Psoas muscle (tissue), 8 donors: ENCODE measurements at regions of chr10 and their contacts with region 1.

Region 1: GRCh38 chr10:71974489-71975021 is 10.4 kb downstream of the CHST3 start:
- DNase-seq: peak; percentile 82 to 89
- ATAC-seq: peak; percentile 61 to 69 (median 66)
- H3K4me3 ChIP-seq: no peak overlapping the region
- H3K27ac ChIP-seq: peak overlapping the region; percentile 87
- H3K4me1 ChIP-seq: peaks cover 73% of the 10 kb centered on the region
- H3K27me3 ChIP-seq: no peaks in the 10 kb centered on the region
- CTCF ChIP-seq: no peak

Region 2: GRCh38 chr10:71995887-71996575 is 21.5 kb after region 1 on chr10:
- intact Hi-C with region 1: loop called in 1 of 2 experiments (anchors 2 kb)
- DNase-seq: peak in 1 of 2 donors; percentile 48
- ATAC-seq: peak in 3 of 4 donors; percentile 55 to 68 (median 57)
- H3K4me3 ChIP-seq: no peak overlapping the region
- H3K27ac ChIP-seq: peak overlapping the region; percentile 78
- H3K4me1 ChIP-seq: peaks cover 56% of the 10 kb centered on the region
- H3K27me3 ChIP-seq: no peaks in the 10 kb centered on the region
- CTCF ChIP-seq: no peak

Region 3: GRCh38 chr10:72016608-72017312 is 42.2 kb after region 1 on chr10:
- intact Hi-C with region 1: loop called in 1 of 2 experiments (anchors 2 kb)
- DNase-seq: peak; percentile 68 to 84
- ATAC-seq: peak; percentile 79 to 92 (median 86)
- H3K4me3 ChIP-seq: no peak overlapping the region
- H3K27ac ChIP-seq: peak overlapping the region; percentile 76
- H3K4me1 ChIP-seq: peaks cover 40% of the 10 kb centered on the region
- H3K27me3 ChIP-seq: no peaks in the 10 kb centered on the region
- CTCF ChIP-seq: no peak